OCI-LY7 (cell line): ENCODE measurements at regions of chr7 and their contacts with region 1.

Region 1: GRCh38 chr7:75957012-75957736 is 37.2 kb downstream of the TMEM120A start:
- DNase-seq: no peak
- H3K4me3 ChIP-seq: no peak overlapping the region
- H3K27ac ChIP-seq: no peak overlapping the region
- H3K4me1 ChIP-seq: no peaks in the 10 kb centered on the region
- CTCF ChIP-seq: no peak

Region 2: GRCh38 chr7:75872073-75872782 is 84.9 kb before region 1 on chr7:
- CTCF ChIA-PET with region 1: no interaction called
- POLR2A ChIA-PET with region 1: no interaction called
- intact Hi-C with region 1: loop called (anchors 5 kb)
- DNase-seq: no peak
- H3K4me3 ChIP-seq: no peak overlapping the region
- H3K27ac ChIP-seq: no peak overlapping the region
- H3K4me1 ChIP-seq: no peaks in the 10 kb centered on the region
- CTCF ChIP-seq: no peak